ENCODE measurements at regions of chr4 and their contacts with region 1.

Region 1: GRCh38 chr4:1130316-1131186 is 17.2 kb upstream of the RNF212 start:
- DNase-seq: peak; percentile 22
- H3K4me3 ChIP-seq: no peak overlapping the region
- H3K27me3 ChIP-seq: peaks cover 3% of the 10 kb centered on the region
- CTCF ChIP-seq: peak; percentile 100

Region 2: GRCh38 chr4:726235-726787 is 404.2 kb before region 1 on chr4:
- CTCF ChIA-PET with region 1: no interaction called
- POLR2A ChIA-PET with region 1: no interaction called
- DNase-seq: peak; percentile 44
- H3K4me3 ChIP-seq: no peak overlapping the region
- H3K27me3 ChIP-seq: no peaks in the 10 kb centered on the region
- CTCF ChIP-seq: no peak

Region 3: GRCh38 chr4:1105662-1106061 is 24.9 kb before region 1 on chr4:
- CTCF ChIA-PET with region 1: interaction called, 14 read pairs
- POLR2A ChIA-PET with region 1: no interaction called
- DNase-seq: no peak
- H3K4me3 ChIP-seq: no peak overlapping the region
- H3K27me3 ChIP-seq: peaks cover 4% of the 10 kb centered on the region
- CTCF ChIP-seq: no peak

Region 4: DNA sequence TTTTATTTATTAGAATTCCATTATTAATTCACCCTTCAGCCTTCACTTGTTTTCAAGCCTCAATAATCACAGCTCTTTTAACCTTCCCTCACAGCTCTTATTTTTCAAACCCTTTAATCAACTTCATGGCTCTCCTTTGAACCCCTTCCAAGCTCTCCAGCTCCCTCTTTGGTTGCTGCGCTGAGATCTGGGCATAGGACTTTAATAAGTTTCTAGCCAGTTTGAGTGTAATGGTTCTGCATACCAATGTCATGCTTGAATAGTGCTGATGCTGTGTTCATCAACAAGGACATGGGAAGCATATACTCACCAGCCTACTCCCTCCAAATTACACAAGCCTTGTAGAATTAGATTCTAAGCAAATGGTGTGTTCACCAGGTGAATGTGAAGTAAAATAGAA is 13.7 kb before region 1 on chr4:
- CTCF ChIA-PET with region 1: interaction called, 23 read pairs
- POLR2A ChIA-PET with region 1: no interaction called
- DNase-seq: no peak
- H3K4me3 ChIP-seq: no peak overlapping the region
- H3K27me3 ChIP-seq: peaks cover 4% of the 10 kb centered on the region; the same call in 1 of the 2 replicates
- CTCF ChIP-seq: 0 out of 2 replicates have a peak, but pooled peaks have one; percentile 16

Region 5: GRCh38 chr4:1167247-1167949 is 36.8 kb after region 1 on chr4:
- CTCF ChIA-PET with region 1: interaction called, 17 read pairs
- POLR2A ChIA-PET with region 1: no interaction called
- DNase-seq: no peak
- H3K4me3 ChIP-seq: peak overlapping the region; percentile 43
- H3K27me3 ChIP-seq: peaks cover 3% of the 10 kb centered on the region; the same call in 1 of the 2 replicates
- CTCF ChIP-seq: peak; percentile 94

Region 6: GRCh38 chr4:1351854-1352633 is 221.5 kb after region 1 on chr4:
- CTCF ChIA-PET with region 1: interaction called, 14 read pairs
- POLR2A ChIA-PET with region 1: no interaction called
- DNase-seq: no peak
- H3K4me3 ChIP-seq: no peak overlapping the region
- H3K27me3 ChIP-seq: no peaks in the 10 kb centered on the region
- CTCF ChIP-seq: peak; percentile 96

Region 7: GRCh38 chr4:1512738-1513660 is 382.4 kb after region 1 on chr4:
- CTCF ChIA-PET with region 1: interaction called, 10 read pairs
- POLR2A ChIA-PET with region 1: no interaction called
- DNase-seq: no peak
- H3K4me3 ChIP-seq: no peak overlapping the region
- H3K27me3 ChIP-seq: peaks cover 15% of the 10 kb centered on the region
- CTCF ChIP-seq: peak; percentile 18; the same call in 1 of the 2 replicates